ENCODE measurements at regions of chr6 and their contacts with region 1.

Region 1: DNA sequence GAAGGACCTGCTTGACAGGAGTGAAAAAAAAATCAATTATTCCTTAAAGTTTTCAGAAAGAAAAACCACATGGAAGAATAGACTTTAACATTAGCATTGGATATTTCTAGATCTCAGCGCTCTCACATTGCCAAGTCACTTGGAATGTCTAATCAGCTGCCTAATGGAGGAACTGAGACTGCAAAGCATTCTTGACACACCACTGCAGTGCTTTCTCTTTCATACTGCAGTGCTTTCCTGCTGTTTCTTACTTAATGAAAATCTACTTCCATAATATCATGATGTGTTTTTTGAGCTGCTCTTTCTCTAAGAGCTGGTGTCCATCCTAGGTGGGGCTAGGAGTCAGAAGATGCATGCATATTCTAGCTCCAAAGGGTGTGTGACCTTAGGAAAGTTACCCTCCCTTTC is 20.4 kb upstream of the MCM3 start:
- DNase-seq: no peak
- ATAC-seq: peak; percentile 42
- H3K4me3 Mint-ChIP-seq: peak overlapping the region; percentile 32
- H3K27ac Mint-ChIP-seq: peak overlapping the region; percentile 89
- H3K4me1 Mint-ChIP-seq: peaks cover 72% of the 10 kb centered on the region
- H3K27me3 Mint-ChIP-seq: no peaks in the 10 kb centered on the region

Region 2: DNA sequence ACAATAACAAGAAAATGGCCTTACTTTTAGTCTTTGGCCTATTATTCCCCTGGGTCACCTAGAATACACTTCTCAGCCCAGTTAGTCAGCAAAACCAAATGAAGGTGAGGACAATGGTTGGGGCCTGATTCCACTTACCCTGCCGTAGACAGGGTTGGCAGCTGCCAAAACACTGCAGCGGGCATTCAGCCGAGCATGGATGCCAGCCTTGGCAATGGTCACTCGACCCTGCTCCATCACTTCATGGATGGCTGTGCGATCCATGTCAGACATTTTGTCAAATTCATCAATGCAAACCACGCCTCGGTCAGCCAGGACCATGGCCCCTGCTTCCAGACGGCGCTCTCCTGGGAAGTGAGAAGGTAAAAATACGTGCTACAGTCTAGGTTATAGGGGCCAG is 28.9 kb before region 1 on chr6:
- CTCF ChIA-PET with region 1: no interaction called
- POLR2A ChIA-PET with region 1: no interaction called
- intact Hi-C with region 1: no loop called
- DNase-seq: no peak
- ATAC-seq: no peak
- H3K4me3 Mint-ChIP-seq: no peak overlapping the region
- H3K27ac Mint-ChIP-seq: peak overlapping the region; percentile 4
- H3K4me1 Mint-ChIP-seq: peaks cover 43% of the 10 kb centered on the region
- H3K27me3 Mint-ChIP-seq: no peaks in the 10 kb centered on the region

Region 3: GRCh38 chr6:52389626-52390360 is 84.8 kb after region 1 on chr6:
- CTCF ChIA-PET with region 1: interaction called, 10 read pairs
- POLR2A ChIA-PET with region 1: interaction called, 4 read pairs
- intact Hi-C with region 1: loop called in 1 of 2 experiments (anchors 2 kb)
- DNase-seq: peak; percentile 74
- ATAC-seq: peak; percentile 52
- H3K4me3 Mint-ChIP-seq: peak overlapping the region; percentile 38
- H3K27ac Mint-ChIP-seq: peak overlapping the region; percentile 86
- H3K4me1 Mint-ChIP-seq: peaks cover 85% of the 10 kb centered on the region
- H3K27me3 Mint-ChIP-seq: no peaks in the 10 kb centered on the region

Region 4: GRCh38 chr6:52557389-52558265 is 252.6 kb after region 1 on chr6:
- CTCF ChIA-PET with region 1: no interaction called
- POLR2A ChIA-PET with region 1: no interaction called
- intact Hi-C with region 1: no loop called
- DNase-seq: no peak
- ATAC-seq: no peak
- H3K4me3 Mint-ChIP-seq: no peak overlapping the region
- H3K27ac Mint-ChIP-seq: no peak overlapping the region
- H3K4me1 Mint-ChIP-seq: peaks cover 5% of the 10 kb centered on the region
- H3K27me3 Mint-ChIP-seq: no peaks in the 10 kb centered on the region